Activated T-helper 1 cell treated with anti-CD3 and anti-CD28 coated beads, Interleukin-12 subunit alpha, Interleukin-12 subunit beta, Interleukin-2, Interleukin-4 antibody, amounts not matched to agents 30 ng/mL and 10 ng/mL and 1 ng/mL, durations not matched to agents 14 hours and 24 hours and 36 hours (primary cell): ENCODE measurements at regions of chr1 and their contacts with region 1.

Region 1: DNA sequence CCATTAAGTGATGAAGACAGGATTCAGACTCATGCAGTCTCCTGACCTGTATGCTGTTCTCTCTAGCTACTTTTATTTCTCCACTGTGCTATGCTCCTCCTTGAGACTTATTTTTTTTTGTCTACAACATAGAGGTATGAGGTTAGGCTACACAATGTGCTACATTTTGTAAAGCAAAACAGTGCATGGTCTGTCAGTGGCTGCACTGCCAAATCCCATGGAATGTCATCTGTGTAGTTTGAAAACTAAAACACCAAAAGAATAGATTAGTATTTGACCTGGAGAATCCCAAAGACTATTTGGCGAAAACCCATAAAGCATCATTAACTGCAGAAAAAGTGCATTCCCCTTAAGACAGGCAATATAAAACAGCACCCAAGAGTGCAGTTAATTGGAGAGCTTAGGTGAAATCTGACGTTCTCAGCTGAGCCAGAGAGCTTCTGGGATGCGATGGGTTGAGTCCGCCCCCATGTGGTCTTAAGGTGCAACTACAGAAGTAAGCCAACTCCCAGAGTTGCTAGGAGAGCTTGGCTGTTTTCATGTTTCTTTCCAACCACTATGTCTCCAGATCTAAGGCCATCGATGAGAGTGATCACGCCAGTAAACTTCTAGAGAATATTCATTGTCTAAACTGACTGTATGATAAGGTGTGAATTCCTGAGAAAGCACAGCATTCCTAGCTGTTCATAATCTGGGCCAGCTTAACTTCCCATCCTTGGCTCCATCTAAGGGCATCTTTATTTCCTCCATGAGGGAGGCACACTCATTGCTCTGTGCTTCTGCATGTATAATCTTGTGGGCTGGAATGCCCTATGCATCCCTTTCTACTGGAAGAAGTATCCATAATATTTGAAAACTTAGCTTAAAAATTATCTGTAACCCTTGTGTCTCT is 20.7 kb upstream of the CYP2J2 start:
- DNase-seq: peak; percentile 24
- H3K4me3 Mint-ChIP-seq: no peak overlapping the region
- H3K27ac Mint-ChIP-seq: no peak overlapping the region
- H3K4me1 Mint-ChIP-seq: no peaks in the 10 kb centered on the region
- H3K27me3 Mint-ChIP-seq: peaks cover 13% of the 10 kb centered on the region

Region 2: DNA sequence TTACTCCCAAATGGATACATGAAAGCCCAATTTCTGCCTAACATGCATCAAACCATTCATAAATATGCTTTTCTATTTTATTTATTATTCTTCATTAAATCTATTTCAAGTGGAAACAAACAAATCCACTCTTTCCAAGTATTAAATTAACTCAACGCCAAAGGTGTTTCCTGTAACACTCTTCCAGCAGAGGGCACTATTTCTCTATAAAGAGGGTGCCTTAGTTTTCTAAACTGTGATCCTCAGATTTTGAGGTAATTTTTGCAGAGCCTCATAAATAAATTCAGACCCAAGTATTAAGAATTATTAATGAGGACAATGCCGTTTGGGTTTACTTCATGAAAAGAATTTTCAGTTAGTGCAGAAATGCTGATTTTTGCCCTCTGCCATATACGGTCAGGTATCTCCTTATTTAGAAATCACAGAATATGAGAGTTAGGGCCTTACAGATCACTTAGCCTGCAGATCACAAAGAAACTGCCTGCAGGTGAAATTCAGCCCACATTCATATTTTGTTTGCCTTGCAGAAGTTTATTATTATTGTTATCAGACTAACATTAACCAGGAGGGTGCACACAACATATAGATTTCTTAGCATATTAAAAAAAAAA is 1207.3 kb before region 1 on chr1:
- intact Hi-C with region 1: loop called (anchors 5 kb)
- DNase-seq: no peak
- H3K4me3 Mint-ChIP-seq: no peak overlapping the region
- H3K27ac Mint-ChIP-seq: no peak overlapping the region
- H3K4me1 Mint-ChIP-seq: peaks cover 18% of the 10 kb centered on the region
- H3K27me3 Mint-ChIP-seq: peaks cover 7% of the 10 kb centered on the region

Region 3: DNA sequence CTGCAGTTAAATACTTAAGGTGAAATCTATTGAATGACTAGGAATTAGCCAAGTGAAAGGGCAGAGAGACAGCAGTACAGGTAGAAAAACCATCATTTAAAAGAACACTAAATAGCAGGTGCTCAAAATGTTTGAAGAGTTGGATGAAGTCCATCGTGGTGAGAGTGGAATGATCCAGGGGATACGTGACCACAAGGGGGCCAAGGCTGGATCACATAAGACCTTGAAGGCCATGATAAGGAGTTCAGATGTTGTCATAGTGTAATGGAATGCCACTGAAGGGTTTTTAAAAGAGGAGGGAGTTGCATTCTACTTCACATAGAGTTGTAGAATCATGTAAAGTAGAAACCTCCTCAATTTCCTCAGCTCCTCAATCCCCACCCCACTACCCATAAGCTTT is 167.3 kb before region 1 on chr1:
- intact Hi-C with region 1: loop called (anchors 5 kb)
- DNase-seq: no peak
- H3K4me3 Mint-ChIP-seq: no peak overlapping the region
- H3K27ac Mint-ChIP-seq: no peak overlapping the region
- H3K4me1 Mint-ChIP-seq: no peaks in the 10 kb centered on the region
- H3K27me3 Mint-ChIP-seq: peaks cover 2% of the 10 kb centered on the region

Region 4: DNA sequence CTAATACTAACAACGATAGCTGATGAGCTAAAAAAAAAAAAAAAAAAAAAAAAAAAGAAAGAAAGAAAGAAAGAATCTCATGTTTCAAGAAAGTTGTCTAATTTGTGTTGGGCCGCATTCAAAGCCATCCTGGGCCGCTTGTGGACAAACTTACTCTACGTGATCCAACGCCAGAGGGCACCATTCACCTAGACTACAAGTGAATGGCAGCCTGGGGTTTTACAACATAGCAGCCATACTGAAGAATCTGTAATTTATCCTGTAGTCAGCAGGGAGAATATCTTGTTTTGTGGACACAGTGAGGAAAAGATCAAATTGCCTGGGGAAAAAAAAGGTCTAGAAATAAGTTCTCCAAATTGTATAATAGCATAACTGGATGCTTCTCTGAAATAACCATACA is 67.7 kb before region 1 on chr1:
- intact Hi-C with region 1: loop called (anchors 1 kb)
- DNase-seq: peak; percentile 22
- H3K4me3 Mint-ChIP-seq: no peak overlapping the region
- H3K27ac Mint-ChIP-seq: no peak overlapping the region
- H3K4me1 Mint-ChIP-seq: no peaks in the 10 kb centered on the region
- H3K27me3 Mint-ChIP-seq: peaks cover 6% of the 10 kb centered on the region

Region 5: GRCh38 chr1:59903141-59903754 is 44.0 kb before region 1 on chr1:
- intact Hi-C with region 1: loop called (anchors 1 kb)
- DNase-seq: no peak
- H3K4me3 Mint-ChIP-seq: no peak overlapping the region
- H3K27ac Mint-ChIP-seq: no peak overlapping the region
- H3K4me1 Mint-ChIP-seq: peaks cover 5% of the 10 kb centered on the region
- H3K27me3 Mint-ChIP-seq: no peaks in the 10 kb centered on the region